Activated CD4-positive, alpha-beta T cell treated with anti-CD3 and anti-CD28 coated beads for 36 hours (primary cell): ENCODE measurements at regions of chr19 and their contacts with region 1.

Region 1: DNA sequence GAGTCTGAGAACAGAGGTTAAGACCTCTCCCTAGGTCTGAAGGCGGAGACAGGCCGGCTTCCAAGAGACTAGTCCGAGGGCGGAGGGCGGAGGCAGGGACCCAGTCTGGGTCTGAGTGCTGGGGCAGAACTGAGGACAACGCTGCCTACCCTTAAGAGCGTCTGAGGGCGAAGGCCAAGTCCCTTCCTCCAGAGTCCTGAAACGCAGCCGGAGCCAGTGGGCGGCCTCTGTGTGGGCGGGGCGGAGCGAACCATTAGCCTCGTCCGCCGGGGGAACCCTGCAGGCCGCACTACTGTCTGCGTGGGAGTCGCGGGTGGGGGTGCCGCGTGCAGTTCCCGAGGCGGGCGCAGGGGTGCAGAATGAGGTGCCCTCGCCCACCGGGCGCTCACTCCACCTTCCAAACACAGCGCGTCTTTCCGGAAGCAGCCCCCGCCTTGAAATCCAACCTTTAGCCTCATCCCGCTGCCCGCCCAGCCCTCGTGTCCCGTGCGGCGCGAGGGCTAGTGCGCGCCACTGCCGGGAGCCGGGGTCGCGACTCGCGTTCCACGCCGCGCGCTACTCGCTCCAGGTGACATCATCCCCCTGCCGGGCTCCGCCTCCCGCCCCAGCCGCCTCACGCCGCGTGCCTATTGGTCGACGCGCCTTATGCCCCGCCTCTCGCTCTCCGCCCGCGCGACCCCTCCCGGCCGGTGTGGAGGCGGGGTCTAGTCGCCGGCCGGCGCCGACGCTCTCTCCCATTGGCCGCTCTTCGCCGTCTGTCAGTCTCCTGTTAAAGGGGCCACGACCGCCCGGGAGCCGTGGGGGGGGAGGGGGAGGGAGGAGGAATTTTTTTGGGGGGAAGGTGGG is at the start of gene C19orf73:
- DNase-seq: peak; percentile 98
- ATAC-seq: peak; percentile 85
- H3K4me3 Mint-ChIP-seq: peak within 1 kb of the TSS; percentile 80
- H3K27ac Mint-ChIP-seq: peak within 1 kb of the TSS; percentile 84
- H3K4me1 Mint-ChIP-seq: peaks cover 28% of the 10 kb centered on the region
- H3K27me3 Mint-ChIP-seq: peaks cover 8% of the 10 kb centered on the region
- total RNA-seq, gene C19orf73: 1.7 to 2.0 TPM

Region 2: DNA sequence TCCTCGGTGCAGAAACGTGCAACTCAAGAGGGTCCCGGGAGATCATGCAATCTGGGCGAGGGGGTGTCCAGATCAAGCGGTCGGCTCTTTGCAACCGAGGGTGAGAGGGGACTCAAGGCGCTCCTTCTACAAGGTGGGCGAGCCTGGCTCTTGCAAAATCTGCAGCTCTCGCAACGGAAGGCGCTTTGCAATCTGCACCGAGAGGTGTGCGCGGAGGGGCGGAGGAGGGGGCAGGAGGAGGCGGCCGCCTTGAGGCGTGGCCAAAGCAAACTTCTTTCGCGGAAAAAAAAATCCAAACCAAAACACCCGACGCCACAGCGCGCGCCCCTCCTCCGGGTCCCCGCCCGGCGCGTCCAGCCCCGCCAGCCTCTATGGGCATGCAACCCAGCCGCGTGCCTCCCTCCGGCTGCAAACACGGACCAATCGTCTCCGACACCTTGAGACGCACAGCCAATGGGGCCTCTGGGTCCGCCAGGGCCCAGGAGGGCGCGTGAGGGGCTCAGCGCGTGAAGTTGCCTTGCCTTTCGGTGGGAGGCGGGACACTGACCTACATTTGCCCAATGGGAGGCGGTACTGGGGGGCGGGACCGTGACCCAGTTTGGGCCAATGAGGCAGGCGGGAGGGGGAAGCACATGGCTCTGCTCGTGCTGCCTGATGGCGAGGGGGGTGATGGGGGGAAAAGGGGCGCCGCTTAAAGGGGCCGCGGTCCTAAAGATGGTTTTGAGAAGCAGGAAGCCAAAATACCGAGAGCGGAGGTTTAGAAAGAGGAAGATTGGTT is 481.4 kb before region 1 on chr19 and contains the start of gene DBP:
- CTCF ChIA-PET with region 1: no interaction called
- POLR2A ChIA-PET with region 1: no interaction called
- intact Hi-C with region 1: loop called in 1 of 2 experiments (anchors 2 kb)
- DNase-seq: peak; percentile 98
- ATAC-seq: peak; percentile 75
- H3K4me3 Mint-ChIP-seq: peak within 1 kb of the TSS; percentile 83
- H3K27ac Mint-ChIP-seq: peak within 1 kb of the TSS; percentile 99
- H3K4me1 Mint-ChIP-seq: peaks cover 55% of the 10 kb centered on the region
- H3K27me3 Mint-ChIP-seq: no peaks in the 10 kb centered on the region
- total RNA-seq, gene DBP: 8.3 to 12.4 TPM

Region 3: DNA sequence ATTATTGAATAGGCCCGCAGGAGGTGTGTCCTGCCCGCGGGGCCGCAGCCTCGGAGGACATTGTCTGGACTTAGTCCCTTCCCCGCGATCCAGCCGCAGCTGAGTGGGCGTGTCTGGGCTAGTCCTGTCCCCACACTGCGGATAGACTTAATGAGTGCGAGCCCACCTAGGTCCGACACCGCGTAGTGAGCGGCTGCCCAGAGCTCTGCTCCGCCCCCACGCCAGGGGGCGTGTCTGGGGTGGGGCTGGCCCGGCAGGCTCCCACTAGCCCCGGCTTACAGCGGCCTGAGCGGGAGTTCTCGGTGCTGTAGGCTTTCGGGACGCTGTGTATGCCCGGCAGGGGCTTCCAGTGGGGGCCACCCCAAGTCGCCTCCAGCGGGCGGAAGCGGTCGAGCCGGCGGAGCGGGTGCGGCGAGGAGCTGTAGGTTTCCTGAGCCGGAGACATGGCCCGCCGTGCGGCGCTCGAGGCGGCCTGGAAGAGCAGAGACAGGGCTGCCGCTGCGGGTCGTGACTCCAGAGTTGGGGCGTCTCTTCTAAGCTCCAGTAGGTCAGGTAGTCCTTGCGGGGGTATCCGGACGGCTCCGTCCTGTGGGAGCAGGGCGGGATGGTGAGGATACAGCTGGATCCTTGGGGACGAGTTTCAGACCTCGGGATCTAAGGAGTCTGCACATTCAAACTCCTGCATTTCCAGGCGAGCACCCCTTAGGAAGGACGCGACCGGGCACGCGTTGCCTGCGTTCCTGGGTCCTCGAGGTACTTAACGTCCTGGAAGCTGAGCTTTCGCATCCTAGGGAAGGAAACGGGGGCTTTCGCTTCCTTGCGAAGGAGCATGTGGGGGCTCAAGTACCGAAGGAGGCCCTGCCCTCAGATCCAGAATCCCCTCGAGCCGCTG is 62.5 kb before region 1 on chr19:
- CTCF ChIA-PET with region 1: no interaction called
- POLR2A ChIA-PET with region 1: no interaction called
- intact Hi-C with region 1: loop called in 1 of 2 experiments (anchors 2 kb)
- DNase-seq: peak; percentile 69
- ATAC-seq: peak; percentile 68
- H3K4me3 Mint-ChIP-seq: peak overlapping the region; percentile 56
- H3K27ac Mint-ChIP-seq: no peak overlapping the region
- H3K4me1 Mint-ChIP-seq: peaks cover 20% of the 10 kb centered on the region
- H3K27me3 Mint-ChIP-seq: peaks cover 35% of the 10 kb centered on the region

Region 4: GRCh38 chr19:49097455-49098288 is 21.1 kb before region 1 on chr19:
- CTCF ChIA-PET with region 1: interaction called, 28 read pairs
- POLR2A ChIA-PET with region 1: interaction called, 3 read pairs
- intact Hi-C with region 1: no loop called
- DNase-seq: peak; percentile 82
- ATAC-seq: peak; percentile 86
- H3K4me3 Mint-ChIP-seq: no peak overlapping the region
- H3K27ac Mint-ChIP-seq: no peak overlapping the region
- H3K4me1 Mint-ChIP-seq: no peaks in the 10 kb centered on the region
- H3K27me3 Mint-ChIP-seq: no peaks in the 10 kb centered on the region

Region 5: DNA sequence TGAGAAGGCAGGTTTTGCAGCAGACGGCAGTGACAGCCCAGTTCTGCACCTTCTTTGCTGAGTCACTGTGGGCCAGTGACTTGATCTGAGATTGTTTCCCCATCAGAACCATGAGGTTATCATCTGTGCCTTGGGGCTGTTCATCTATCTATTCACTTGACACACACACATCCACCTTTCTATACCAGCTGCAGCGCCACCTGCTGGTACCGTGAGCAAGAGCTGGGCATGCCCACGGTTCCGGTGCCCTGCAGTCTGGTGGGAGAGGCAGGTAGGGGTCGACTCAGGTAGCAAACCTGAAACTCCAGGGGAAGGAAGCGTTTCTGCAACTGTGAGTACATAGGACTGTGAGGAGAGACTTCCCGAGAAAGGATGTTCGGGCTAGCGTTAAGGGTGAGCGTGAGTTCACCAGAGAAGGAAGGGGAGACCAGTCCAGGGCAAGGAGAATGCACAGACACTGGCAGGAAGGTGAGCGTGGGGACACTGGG is 12.1 kb before region 1 on chr19:
- CTCF ChIA-PET with region 1: interaction called, 21 read pairs
- POLR2A ChIA-PET with region 1: interaction called, 3 read pairs
- intact Hi-C with region 1: no loop called
- DNase-seq: peak; percentile 82
- ATAC-seq: peak; percentile 84
- H3K4me3 Mint-ChIP-seq: no peak overlapping the region
- H3K27ac Mint-ChIP-seq: no peak overlapping the region
- H3K4me1 Mint-ChIP-seq: peaks cover 4% of the 10 kb centered on the region
- H3K27me3 Mint-ChIP-seq: no peaks in the 10 kb centered on the region

Region 6: DNA sequence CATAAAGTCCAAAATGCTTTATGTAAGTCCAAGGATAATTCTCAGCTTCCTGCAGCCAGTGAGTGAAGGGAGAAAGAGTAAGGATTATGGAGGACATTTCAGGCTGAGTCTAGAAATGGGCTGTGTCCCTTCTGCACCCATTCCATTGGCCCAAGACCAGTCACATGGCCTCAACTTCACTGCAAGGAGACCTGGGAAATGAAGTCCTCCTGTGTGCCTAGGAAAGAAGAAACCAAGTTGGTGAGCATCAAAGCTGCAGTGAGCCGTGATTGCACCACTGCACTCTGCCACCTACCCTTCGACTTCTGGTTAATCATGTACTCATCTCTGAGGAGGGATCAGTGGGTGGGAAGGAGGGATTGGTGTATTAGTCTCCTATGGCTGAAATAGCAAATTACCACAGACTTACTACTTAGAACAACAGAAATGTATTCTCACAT is 212.8 kb after region 1 on chr19:
- CTCF ChIA-PET with region 1: no interaction called
- POLR2A ChIA-PET with region 1: no interaction called
- intact Hi-C with region 1: loop called in 1 of 2 experiments (anchors 2 kb)
- DNase-seq: peak; percentile 80
- ATAC-seq: peak; percentile 80
- H3K4me3 Mint-ChIP-seq: peak overlapping the region; percentile 33
- H3K27ac Mint-ChIP-seq: peak overlapping the region; percentile 75
- H3K4me1 Mint-ChIP-seq: peaks cover 81% of the 10 kb centered on the region
- H3K27me3 Mint-ChIP-seq: no peaks in the 10 kb centered on the region